H1 (cell line): ENCODE measurements at regions of chr1 and their contacts with region 1.

Region 1: GRCh38 chr1:185595835-185596667 is 138.1 kb upstream of the HMCN1 start:
- DNase-seq: peak; percentile 23 to 77
- H3K4me3 ChIP-seq: no peak overlapping the region
- H3K27ac ChIP-seq: no peak overlapping the region
- H3K4me1 ChIP-seq: no peaks in the 10 kb centered on the region
- H3K27me3 ChIP-seq: no peaks in the 10 kb centered on the region
- CTCF ChIP-seq: peak in 2 of 3 experiments; percentile 73 to 88; a peak in 3 of 4 replicates
- EP300 ChIP-seq: no peak
- POLR2A ChIP-seq: no peak
- RAD21 ChIP-seq: peak; percentile 57 to 77

Region 2: GRCh38 chr1:185322636-185323035 is 273.4 kb before region 1 on chr1:
- CTCF ChIA-PET with region 1: interaction called, 32 read pairs
- POLR2A ChIA-PET with region 1: interaction called, 8 read pairs
- DNase-seq: no peak
- H3K4me3 ChIP-seq: no peak overlapping the region
- H3K27ac ChIP-seq: no peak overlapping the region
- H3K4me1 ChIP-seq: peaks cover 0 to 3% (median under 1%) of the 10 kb centered on the region in 4 experiments; a peak in 4 of 7 replicates
- H3K27me3 ChIP-seq: no peaks in the 10 kb centered on the region
- CTCF ChIP-seq: no peak
- EP300 ChIP-seq: no peak
- POLR2A ChIP-seq: no peak
- RAD21 ChIP-seq: no peak

Region 3: DNA sequence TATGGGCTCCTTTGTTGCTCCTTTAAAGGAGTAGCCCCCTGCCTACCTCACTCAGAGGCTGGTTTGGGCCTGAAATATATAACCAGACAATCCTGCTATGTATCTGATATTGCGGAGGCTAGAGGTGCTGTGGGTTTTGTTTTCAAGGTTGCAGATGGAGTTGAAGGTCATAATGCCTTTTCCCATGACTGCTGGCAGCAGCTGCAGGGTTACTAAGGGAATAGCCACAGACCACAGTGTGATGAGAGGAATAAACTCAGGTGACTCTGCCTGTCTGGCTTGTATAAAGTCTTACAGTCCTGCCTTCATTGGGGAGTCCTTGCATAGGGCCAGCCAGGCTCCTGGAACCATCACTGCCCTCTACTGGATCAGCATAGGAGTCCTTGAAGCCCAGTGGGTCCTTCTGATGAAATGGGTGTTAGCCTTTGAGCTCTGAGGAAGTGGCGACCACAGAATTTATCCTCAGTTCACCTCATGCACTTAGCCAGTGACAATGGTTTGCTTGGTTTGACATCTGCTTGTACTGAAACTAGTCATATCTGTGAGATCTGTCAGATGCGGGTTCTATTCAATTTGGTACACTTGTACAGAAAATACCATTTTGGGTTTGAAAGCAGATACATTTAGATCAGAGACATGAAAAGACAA is 36.2 kb before region 1 on chr1:
- CTCF ChIA-PET with region 1: interaction called, 33 read pairs
- POLR2A ChIA-PET with region 1: no interaction called
- DNase-seq: peak; percentile 51 to 54
- H3K4me3 ChIP-seq: no peak overlapping the region
- H3K27ac ChIP-seq: no peak overlapping the region
- H3K4me1 ChIP-seq: no peaks in the 10 kb centered on the region; a peak in 2 of 7 replicates
- H3K27me3 ChIP-seq: no peaks in the 10 kb centered on the region
- CTCF ChIP-seq: peak; percentile 66 to 86 (median 67)
- EP300 ChIP-seq: no peak
- POLR2A ChIP-seq: no peak
- RAD21 ChIP-seq: peak; percentile 81 to 86

Region 4: GRCh38 chr1:185581961-185582725 is 13.9 kb before region 1 on chr1:
- CTCF ChIA-PET with region 1: interaction called, 27 read pairs
- POLR2A ChIA-PET with region 1: no interaction called
- DNase-seq: no peak
- H3K4me3 ChIP-seq: no peak overlapping the region
- H3K27ac ChIP-seq: no peak overlapping the region
- H3K4me1 ChIP-seq: no peaks in the 10 kb centered on the region
- H3K27me3 ChIP-seq: no peaks in the 10 kb centered on the region
- CTCF ChIP-seq: no peak
- EP300 ChIP-seq: no peak
- POLR2A ChIP-seq: no peak
- RAD21 ChIP-seq: no peak

Region 5: DNA sequence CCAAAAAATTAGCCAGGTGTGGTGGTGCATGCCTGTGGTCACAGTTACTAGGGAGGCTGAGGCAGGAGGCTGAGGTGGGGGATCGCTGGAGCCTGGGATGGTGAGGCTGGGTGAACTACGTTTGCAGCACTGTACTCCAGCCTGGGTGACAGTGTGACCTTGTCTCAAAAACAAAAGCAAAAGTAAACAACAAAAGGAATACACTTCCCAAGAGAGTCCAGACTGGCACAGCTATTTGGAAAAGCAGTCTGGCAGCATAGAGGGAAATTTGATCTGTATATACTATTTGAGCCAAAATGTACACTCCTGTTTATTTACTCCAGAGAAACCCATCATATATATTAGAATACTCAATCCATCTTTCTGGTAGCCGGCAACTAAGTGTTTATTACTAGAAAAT is 31.1 kb after region 1 on chr1:
- CTCF ChIA-PET with region 1: interaction called, 11 read pairs
- POLR2A ChIA-PET with region 1: no interaction called
- DNase-seq: no peak
- H3K4me3 ChIP-seq: no peak overlapping the region
- H3K27ac ChIP-seq: no peak overlapping the region
- H3K4me1 ChIP-seq: no peaks in the 10 kb centered on the region
- H3K27me3 ChIP-seq: no peaks in the 10 kb centered on the region
- CTCF ChIP-seq: no peak
- EP300 ChIP-seq: no peak
- POLR2A ChIP-seq: no peak
- RAD21 ChIP-seq: no peak

Region 6: GRCh38 chr1:185652348-185652747 is 56.3 kb after region 1 on chr1:
- CTCF ChIA-PET with region 1: interaction called, 13 read pairs
- POLR2A ChIA-PET with region 1: no interaction called
- DNase-seq: no peak
- H3K4me3 ChIP-seq: no peak overlapping the region
- H3K27ac ChIP-seq: no peak overlapping the region
- H3K4me1 ChIP-seq: 0 out of 7 replicates have a peak, but pooled peaks cover 0 to 2% (median 0%) of the 10 kb centered on the region in 4 experiments
- H3K27me3 ChIP-seq: no peaks in the 10 kb centered on the region
- CTCF ChIP-seq: peak; percentile 22 to 50 (median 42)
- EP300 ChIP-seq: no peak
- POLR2A ChIP-seq: no peak
- RAD21 ChIP-seq: peak; percentile 46 to 64

Region 7: DNA sequence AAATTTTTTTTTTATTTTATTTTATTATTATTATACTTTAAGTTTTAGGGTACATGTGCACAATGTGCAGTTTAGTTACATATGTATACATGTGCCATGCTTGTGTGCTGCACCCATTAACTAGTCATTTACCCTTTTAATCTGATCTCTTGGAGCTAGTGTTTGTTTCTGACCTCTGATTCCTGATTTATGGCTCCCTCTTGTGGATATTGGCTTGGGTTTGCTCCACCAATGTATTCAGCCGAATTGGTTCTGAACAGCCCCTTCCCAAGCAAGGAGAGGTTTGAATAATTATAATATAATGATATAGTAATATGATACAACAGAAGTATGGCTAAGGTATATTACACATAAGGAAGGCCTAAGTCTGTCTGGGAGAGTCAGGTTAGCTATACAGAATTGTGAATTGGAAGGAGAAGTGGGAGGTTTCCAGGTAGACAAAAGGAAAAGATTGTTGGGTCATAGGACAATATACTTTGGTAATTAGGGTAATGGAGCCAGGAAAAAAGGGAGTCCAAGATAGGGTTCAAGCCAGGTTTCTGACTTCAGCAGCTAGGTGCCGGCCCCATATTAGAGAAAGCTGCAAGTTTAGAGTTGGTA is 85.1 kb after region 1 on chr1:
- CTCF ChIA-PET with region 1: interaction called, 19 read pairs
- POLR2A ChIA-PET with region 1: no interaction called
- DNase-seq: no peak
- H3K4me3 ChIP-seq: no peak overlapping the region
- H3K27ac ChIP-seq: no peak overlapping the region
- H3K4me1 ChIP-seq: no peaks in the 10 kb centered on the region; a peak in 2 of 7 replicates
- H3K27me3 ChIP-seq: no peaks in the 10 kb centered on the region
- CTCF ChIP-seq: peak in 2 of 3 experiments; percentile 65; a peak in 3 of 4 replicates
- EP300 ChIP-seq: no peak
- POLR2A ChIP-seq: no peak
- RAD21 ChIP-seq: peak; percentile 82 to 83

Region 8: DNA sequence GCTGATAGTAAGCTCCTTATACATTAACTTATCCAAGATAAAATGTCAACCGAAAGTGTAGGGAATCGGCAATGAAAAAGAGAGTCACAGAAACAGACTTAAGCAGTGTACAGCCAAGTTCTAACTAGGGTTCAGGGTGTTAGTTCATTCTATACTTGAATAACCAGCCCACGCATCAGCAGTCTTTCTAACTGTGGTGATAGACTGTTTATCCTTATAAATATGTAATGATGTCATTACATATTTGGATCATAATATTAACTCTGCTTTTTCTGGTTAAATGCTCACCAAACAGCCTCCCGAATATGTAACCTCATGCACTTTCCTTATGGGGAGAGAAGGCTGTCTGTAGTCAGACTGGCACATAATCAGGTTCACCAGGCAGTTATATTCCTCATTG is 149.1 kb after region 1 on chr1:
- CTCF ChIA-PET with region 1: no interaction called
- POLR2A ChIA-PET with region 1: no interaction called
- DNase-seq: no peak
- H3K4me3 ChIP-seq: no peak overlapping the region
- H3K27ac ChIP-seq: no peak overlapping the region
- H3K4me1 ChIP-seq: no peaks in the 10 kb centered on the region
- H3K27me3 ChIP-seq: no peaks in the 10 kb centered on the region
- CTCF ChIP-seq: no peak
- EP300 ChIP-seq: no peak
- POLR2A ChIP-seq: no peak
- RAD21 ChIP-seq: no peak